Activated CD4-positive, alpha-beta memory T cell treated with anti-CD3 and anti-CD28 coated beads for 36 hours (primary cell): ENCODE measurements at regions of chr17 and their contacts with region 1.

Region 1: GRCh38 chr17:70622368-70623260 is 453.3 kb downstream of the KCNJ2 start:
- DNase-seq: peak; percentile 16
- H3K4me3 Mint-ChIP-seq: no peak overlapping the region
- H3K27ac Mint-ChIP-seq: no peak overlapping the region
- H3K4me1 Mint-ChIP-seq: no peaks in the 10 kb centered on the region
- H3K27me3 Mint-ChIP-seq: no peaks in the 10 kb centered on the region

Region 2: DNA sequence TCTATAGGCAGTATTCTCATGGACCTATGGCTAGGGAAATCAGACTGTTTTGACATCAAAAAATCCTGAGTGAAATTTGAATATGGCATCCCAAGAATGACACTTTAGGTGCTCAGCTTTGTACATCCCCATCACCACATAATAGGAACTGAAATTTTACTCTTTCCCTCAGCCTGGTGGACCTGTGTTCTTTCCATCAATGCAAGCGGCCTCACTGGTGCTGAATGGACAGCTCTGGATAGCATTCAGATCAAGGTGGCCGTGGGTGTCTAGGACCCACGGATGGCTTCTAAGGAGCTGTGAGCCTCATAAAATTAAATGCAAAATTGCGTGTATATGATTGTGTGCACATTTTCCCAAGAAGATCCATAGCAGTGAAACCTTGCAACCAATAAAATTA is 1055.5 kb before region 1 on chr17:
- CTCF ChIA-PET with region 1: no interaction called
- POLR2A ChIA-PET with region 1: no interaction called
- intact Hi-C with region 1: loop called (anchors 5 kb)
- DNase-seq: no peak
- H3K4me3 Mint-ChIP-seq: no peak overlapping the region
- H3K27ac Mint-ChIP-seq: no peak overlapping the region
- H3K4me1 Mint-ChIP-seq: peaks cover 3% of the 10 kb centered on the region
- H3K27me3 Mint-ChIP-seq: peaks cover 4% of the 10 kb centered on the region

Region 3: DNA sequence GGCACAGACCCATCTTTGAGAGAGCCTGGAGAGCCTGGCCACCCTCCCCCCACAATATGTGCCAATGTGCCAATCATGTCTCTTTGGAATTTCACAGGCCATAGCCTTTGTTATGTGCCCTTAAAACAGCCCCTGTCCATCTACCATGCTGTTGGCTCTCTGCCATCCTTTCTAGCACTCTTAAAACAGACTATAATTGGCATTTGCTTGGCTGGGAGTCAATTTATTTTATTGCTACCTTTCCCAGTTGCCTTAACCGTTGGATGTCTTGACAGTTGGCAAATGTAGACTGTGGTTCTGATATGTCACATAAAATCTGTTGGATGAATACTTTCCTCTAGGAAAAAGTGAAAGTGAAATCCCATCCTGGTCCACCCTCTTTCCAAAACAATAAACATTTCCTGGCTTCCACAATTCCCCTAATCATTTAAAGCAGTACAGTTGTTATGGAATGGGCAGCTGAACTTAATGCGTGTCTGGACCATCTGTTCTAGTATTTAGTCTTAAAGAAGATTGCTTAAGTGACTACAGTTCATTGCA is 59.3 kb before region 1 on chr17:
- CTCF ChIA-PET with region 1: no interaction called
- POLR2A ChIA-PET with region 1: no interaction called
- intact Hi-C with region 1: no loop called
- DNase-seq: no peak
- H3K4me3 Mint-ChIP-seq: no peak overlapping the region
- H3K27ac Mint-ChIP-seq: no peak overlapping the region
- H3K4me1 Mint-ChIP-seq: no peaks in the 10 kb centered on the region
- H3K27me3 Mint-ChIP-seq: no peaks in the 10 kb centered on the region